ENCODE measurements at regions of chr7 and their contacts with region 1.

Region 1: DNA sequence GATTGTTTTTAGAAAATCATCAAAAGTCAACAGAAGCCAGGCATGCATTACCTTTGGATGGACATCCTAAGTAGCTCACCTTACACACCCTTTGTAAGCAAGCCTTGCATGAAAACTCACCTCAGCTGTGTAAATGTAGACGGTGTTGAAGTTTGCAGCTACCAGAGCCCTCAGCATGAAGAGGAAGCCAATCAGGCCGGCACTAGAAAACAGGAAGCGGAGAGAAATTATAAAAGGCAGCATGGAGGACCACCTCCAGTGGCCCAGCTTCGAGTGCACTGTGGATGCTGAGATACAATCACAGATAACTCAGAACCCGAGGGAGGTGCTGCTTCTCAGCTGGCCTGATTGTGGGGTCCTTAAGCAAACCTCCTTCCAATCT is 75.3 kb downstream of the SVOPL start:
- DNase-seq: peak; percentile 28
- H3K4me3 Mint-ChIP-seq: peak overlapping the region; percentile 47
- H3K27ac Mint-ChIP-seq: peak overlapping the region; percentile 73
- H3K4me1 Mint-ChIP-seq: peaks cover 47% of the 10 kb centered on the region
- H3K27me3 Mint-ChIP-seq: peaks cover 15% of the 10 kb centered on the region

Region 2: GRCh38 chr7:138170959-138171703 is 454.7 kb before region 1 on chr7:
- intact Hi-C with region 1: loop called (anchors 1 kb)
- DNase-seq: no peak
- H3K4me3 Mint-ChIP-seq: no peak overlapping the region
- H3K27ac Mint-ChIP-seq: peak overlapping the region; percentile 14
- H3K4me1 Mint-ChIP-seq: peaks cover 27% of the 10 kb centered on the region
- H3K27me3 Mint-ChIP-seq: peaks cover 38% of the 10 kb centered on the region

Region 3: GRCh38 chr7:138542183-138542582 is 83.7 kb before region 1 on chr7:
- intact Hi-C with region 1: loop called (anchors 5 kb)
- DNase-seq: no peak
- H3K4me3 Mint-ChIP-seq: no peak overlapping the region
- H3K27ac Mint-ChIP-seq: peak overlapping the region; percentile 49
- H3K4me1 Mint-ChIP-seq: peaks cover 10% of the 10 kb centered on the region
- H3K27me3 Mint-ChIP-seq: no peaks in the 10 kb centered on the region

Region 4: GRCh38 chr7:138713191-138713590 is 87.4 kb after region 1 on chr7:
- intact Hi-C with region 1: loop called (anchors 5 kb)
- DNase-seq: no peak
- H3K4me3 Mint-ChIP-seq: no peak overlapping the region
- H3K27ac Mint-ChIP-seq: no peak overlapping the region
- H3K4me1 Mint-ChIP-seq: peaks cover 14% of the 10 kb centered on the region
- H3K27me3 Mint-ChIP-seq: peaks cover 19% of the 10 kb centered on the region

Region 5: GRCh38 chr7:138875794-138876193 is 250.0 kb after region 1 on chr7:
- intact Hi-C with region 1: loop called (anchors 5 kb)
- DNase-seq: peak; percentile 75
- H3K4me3 Mint-ChIP-seq: no peak overlapping the region
- H3K27ac Mint-ChIP-seq: peak overlapping the region; percentile 52
- H3K4me1 Mint-ChIP-seq: peaks cover 28% of the 10 kb centered on the region
- H3K27me3 Mint-ChIP-seq: peaks cover 2% of the 10 kb centered on the region